ENCODE measurements at regions of chr6 and their contacts with region 1.

Region 1: DNA sequence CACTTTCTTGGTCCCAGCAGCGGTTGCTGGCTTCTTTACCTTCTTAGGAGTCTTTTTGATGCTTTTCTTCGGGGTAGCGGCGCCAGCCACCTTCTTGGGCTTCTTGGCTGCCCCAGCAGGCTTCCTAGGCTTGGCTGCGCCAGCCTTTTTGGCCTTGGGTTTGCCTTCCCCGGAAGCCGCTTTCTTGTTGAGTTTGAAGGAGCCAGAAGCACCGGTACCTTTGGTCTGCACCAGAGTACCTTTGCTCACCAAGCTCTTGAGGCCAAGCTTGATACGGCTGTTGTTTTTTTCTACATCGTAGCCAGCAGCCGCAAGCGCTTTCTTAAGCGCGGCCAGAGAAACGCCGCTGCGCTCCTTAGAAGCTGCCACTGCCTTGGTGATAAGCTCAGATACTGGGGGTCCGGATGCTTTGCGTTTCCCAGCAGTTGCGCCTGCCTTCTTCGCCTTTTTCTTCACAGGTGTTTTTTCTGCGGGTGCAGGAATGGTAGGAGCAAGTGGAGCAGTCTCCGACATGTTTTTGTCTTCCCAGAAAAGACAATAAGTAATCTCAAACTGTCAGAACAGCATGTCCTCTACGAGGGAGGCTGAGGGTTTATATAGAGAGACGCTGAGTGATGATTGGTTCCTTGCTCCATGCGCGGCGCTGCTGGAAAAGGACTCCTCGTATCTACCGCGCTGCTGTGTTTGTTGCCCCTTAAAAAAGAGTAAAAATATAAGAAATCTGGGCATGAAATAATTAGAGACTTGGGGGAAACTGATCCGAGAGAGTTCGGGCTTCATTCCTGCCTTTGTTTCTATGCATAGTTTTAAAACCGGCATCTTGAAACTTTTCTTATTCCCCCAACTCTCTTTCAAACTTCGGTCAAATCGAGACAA is 130.3 kb upstream of the BTN3A2 start:
- DNase-seq: peak; percentile 85
- H3K4me3 Mint-ChIP-seq: peak overlapping the region; percentile 76
- H3K27ac Mint-ChIP-seq: peak overlapping the region; percentile 95
- H3K4me1 Mint-ChIP-seq: peaks cover 41% of the 10 kb centered on the region
- H3K27me3 Mint-ChIP-seq: no peaks in the 10 kb centered on the region

Region 2: DNA sequence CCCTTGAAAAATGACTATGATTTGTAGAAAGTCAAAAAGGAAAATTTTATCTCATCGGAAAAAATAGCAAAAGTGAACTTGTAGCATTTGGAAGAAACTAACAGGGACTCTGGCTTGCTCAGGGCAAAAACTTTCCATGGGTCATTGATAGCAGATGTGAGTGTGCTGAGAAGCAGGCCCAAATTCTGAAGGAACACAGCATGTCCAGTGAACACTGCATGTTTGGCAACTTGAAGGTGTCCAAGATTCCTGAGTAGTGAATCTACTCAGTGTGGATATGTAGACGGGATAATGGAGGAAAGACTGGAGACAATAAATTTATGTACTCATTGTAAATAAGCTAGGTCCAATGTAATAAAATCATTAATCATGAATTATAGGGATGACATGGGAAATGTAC is 312.4 kb before region 1 on chr6:
- CTCF ChIA-PET with region 1: no interaction called
- POLR2A ChIA-PET with region 1: no interaction called
- DNase-seq: no peak
- H3K4me3 Mint-ChIP-seq: no peak overlapping the region
- H3K27ac Mint-ChIP-seq: no peak overlapping the region
- H3K4me1 Mint-ChIP-seq: peaks cover 4% of the 10 kb centered on the region
- H3K27me3 Mint-ChIP-seq: no peaks in the 10 kb centered on the region

Region 3: DNA sequence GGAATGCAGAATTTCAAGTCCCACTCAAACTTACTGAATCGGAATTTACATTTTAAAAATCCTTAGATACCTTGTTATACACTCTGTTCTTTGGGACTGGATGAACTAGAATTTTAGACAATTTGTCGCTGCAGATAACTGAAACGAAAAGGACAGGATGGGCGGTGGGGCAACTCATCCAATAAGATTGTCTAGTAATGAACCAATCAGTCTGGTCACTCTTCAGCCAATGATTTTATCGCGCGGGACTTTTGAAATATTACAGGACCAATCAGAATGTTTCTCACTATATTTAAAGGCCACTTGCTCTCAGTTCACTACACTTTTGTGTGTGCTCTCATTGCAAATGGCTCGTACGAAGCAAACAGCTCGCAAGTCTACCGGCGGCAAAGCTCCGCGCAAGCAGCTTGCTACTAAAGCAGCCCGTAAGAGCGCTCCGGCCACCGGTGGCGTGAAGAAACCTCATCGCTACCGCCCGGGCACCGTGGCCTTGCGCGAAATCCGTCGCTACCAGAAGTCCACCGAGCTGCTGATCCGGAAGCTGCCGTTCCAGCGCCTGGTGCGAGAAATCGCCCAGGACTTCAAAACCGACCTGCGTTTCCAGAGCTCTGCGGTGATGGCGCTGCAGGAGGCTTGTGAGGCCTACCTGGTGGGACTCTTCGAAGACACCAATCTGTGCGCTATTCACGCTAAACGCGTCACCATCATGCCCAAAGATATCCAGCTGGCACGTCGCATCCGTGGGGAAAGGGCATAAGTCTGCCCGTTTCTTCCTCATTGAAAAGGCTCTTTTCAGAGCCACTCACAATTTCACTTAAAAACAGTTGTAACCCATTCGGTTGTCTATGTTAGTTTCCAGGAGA is 189.4 kb before region 1 on chr6:
- CTCF ChIA-PET with region 1: interaction called, 3 read pairs
- POLR2A ChIA-PET with region 1: interaction called, 83 read pairs
- DNase-seq: peak; percentile 82
- H3K4me3 Mint-ChIP-seq: peak overlapping the region; percentile 79
- H3K27ac Mint-ChIP-seq: peak overlapping the region; percentile 99
- H3K4me1 Mint-ChIP-seq: peaks cover 44% of the 10 kb centered on the region
- H3K27me3 Mint-ChIP-seq: no peaks in the 10 kb centered on the region

Region 4: GRCh38 chr6:26183581-26184366 is 50.9 kb before region 1 on chr6:
- CTCF ChIA-PET with region 1: interaction called, 3 read pairs
- POLR2A ChIA-PET with region 1: interaction called, 103 read pairs
- DNase-seq: peak; percentile 78
- H3K4me3 Mint-ChIP-seq: peak overlapping the region; percentile 75
- H3K27ac Mint-ChIP-seq: peak overlapping the region; percentile 92
- H3K4me1 Mint-ChIP-seq: peaks cover 71% of the 10 kb centered on the region
- H3K27me3 Mint-ChIP-seq: no peaks in the 10 kb centered on the region

Region 5: GRCh38 chr6:26216356-26216885 is 18.2 kb before region 1 on chr6:
- CTCF ChIA-PET with region 1: interaction called, 34 read pairs
- POLR2A ChIA-PET with region 1: interaction called, 833 read pairs
- DNase-seq: peak; percentile 90
- H3K4me3 Mint-ChIP-seq: no peak overlapping the region
- H3K27ac Mint-ChIP-seq: no peak overlapping the region
- H3K4me1 Mint-ChIP-seq: peaks cover 28% of the 10 kb centered on the region
- H3K27me3 Mint-ChIP-seq: no peaks in the 10 kb centered on the region

Region 6: GRCh38 chr6:26258200-26258977 is 23.7 kb after region 1 on chr6:
- CTCF ChIA-PET with region 1: interaction called, 3 read pairs
- POLR2A ChIA-PET with region 1: interaction called, 13 read pairs
- DNase-seq: no peak
- H3K4me3 Mint-ChIP-seq: no peak overlapping the region
- H3K27ac Mint-ChIP-seq: no peak overlapping the region
- H3K4me1 Mint-ChIP-seq: peaks cover 17% of the 10 kb centered on the region
- H3K27me3 Mint-ChIP-seq: no peaks in the 10 kb centered on the region

Region 7: GRCh38 chr6:27825025-27825793 is 1590.5 kb after region 1 on chr6:
- CTCF ChIA-PET with region 1: no interaction called
- POLR2A ChIA-PET with region 1: interaction called, 16 read pairs
- DNase-seq: no peak
- H3K4me3 Mint-ChIP-seq: peak overlapping the region; percentile 82
- H3K27ac Mint-ChIP-seq: peak overlapping the region; percentile 99
- H3K4me1 Mint-ChIP-seq: peaks cover 51% of the 10 kb centered on the region
- H3K27me3 Mint-ChIP-seq: no peaks in the 10 kb centered on the region